ENCODE measurements at regions of chr10 and their contacts with region 1.

Region 1: DNA sequence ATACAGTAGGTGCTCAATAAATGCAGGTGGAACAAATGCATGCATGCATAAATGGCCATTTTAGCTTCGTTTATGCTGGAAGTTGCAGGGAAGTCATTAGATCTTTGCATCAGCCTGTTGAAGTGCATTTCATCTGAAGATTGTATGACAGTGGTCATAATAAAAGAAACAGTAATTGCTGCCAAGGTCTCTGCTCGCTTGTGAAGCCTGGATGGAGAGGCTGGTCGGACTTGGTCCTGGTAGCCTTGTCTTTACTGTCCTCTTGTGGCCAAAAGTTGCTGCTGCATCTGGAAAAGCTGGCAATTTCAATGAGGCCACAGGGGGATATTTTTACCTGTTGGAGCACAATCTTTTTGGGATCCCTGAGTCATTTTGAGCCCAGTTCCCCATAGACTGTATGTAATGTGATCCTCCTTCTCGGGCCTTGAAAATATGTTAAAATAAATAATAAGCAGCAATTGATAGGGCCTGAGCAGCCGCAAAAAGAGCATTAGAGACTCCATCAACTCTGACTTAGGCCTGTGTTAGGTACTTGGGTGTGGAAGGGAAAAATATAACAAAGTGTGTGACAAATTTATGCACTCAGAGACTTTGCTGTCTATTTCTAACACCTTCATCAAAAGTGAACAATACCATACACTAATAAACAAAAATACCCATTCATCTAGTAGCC is 31.6 kb upstream of the HABP2 start:
- DNase-seq: no peak
- ATAC-seq: peak; percentile 81

Region 2: DNA sequence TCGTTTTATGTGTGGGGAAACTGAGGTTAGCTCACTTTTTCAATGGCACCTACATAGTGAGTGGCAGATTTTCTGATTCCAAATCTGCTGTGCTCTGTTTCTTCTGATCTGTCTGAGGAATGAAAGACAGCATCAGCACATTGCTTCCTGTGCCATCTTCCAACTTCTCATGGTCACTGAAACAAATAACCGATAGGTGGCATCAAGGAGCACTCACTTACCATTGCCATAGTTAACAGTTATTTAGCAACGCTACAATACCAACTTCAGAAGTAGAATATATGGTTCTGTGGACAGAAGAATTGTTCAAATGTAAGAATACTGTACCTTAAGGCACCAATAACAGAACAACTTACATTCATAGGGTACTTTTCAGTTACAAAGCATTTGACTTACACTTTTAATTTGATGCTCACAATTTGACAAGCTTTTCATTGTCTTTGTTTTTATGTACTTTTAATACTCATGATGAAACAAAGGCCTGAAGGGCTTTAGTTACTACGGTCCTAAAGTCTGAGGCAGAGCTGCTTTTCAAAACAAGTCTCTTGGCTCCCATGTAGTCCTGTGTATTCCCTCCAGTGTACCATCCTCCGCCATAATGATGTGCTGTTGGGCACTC is 800.1 kb before region 1 on chr10:
- intact Hi-C with region 1: loop called (anchors 5 kb)
- DNase-seq: no peak
- ATAC-seq: peak; percentile 28

Region 3: DNA sequence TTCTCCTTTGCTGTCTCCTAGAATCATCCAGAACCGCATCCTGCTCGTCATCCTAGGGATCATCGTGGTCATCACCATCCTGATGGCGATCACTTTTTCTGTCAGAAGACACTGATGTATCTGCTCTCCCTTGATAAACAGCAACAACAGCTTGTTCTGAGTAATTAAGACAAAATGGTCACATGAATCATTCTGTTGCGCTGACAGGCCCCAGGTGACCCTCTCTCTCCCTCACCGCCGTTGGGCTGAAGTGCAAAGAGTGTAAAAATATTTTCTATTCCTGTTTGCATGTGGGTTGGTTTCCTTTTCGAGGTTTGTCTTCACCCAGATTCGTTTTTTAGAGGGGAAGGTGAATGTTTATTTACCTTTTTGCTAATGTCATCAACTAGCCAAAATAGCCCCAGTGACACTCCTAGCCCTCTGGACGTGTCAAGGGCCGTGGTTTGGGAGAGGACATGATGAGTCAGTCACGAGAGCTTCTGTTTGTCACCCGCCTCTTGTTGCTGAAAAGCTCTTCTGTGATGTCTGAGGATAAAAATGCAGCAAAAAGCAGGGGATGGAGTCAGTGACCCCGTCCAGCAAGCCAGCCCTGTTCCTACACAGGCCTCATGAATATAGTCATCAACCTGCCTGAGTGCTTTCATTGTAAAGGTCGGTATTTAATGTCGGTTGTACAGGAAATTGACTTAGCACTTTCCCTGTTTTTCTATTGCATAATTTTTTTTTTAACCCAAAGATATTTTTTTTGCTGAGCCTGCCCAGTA is 705.8 kb before region 1 on chr10:
- intact Hi-C with region 1: no loop called
- DNase-seq: no peak
- ATAC-seq: peak; percentile 35

Region 4: DNA sequence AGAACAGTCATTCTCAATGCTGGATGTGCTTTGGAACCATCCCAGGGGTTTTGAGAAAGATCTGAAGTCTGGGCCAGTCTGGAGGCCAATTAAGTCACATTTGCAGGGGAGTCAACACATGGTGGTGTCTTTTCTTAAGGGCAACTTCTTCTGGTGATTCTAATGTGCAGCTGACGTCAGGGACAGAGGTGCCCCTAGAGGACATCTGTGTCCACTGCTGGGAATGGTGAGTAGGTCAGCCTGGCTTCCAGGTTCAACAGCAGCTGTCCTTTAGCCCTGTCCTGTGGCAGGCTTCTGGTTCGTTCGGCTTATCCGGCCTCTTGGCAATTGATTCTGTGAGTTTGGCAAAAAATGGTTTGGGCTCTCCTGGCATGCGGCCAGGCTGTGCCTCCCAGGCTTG is 238.1 kb before region 1 on chr10:
- intact Hi-C with region 1: no loop called
- DNase-seq: no peak
- ATAC-seq: no peak

Region 5: DNA sequence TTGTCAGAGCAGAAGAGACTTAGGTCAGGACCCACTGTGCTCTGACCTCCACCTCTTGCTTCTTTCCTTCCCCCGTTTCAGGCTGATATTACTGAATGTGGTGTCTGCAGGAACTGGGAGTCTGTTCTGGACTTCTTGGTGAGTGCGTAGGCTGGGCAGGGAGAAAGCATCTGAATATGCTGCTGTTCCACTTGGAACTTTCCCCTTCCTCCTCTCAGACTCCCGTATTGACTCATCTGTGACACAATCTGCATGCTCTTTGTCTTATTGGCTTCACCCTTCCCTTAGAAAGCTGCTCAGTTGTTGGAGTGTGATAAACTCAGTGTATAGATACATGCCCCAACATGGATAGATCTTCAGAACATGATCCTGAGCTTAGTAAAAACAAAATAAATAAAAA is 106.0 kb before region 1 on chr10:
- intact Hi-C with region 1: no loop called
- DNase-seq: no peak
- ATAC-seq: no peak

Region 6: GRCh38 chr10:113454341-113455061 is 66.8 kb before region 1 on chr10:
- intact Hi-C with region 1: loop called (anchors 5 kb)
- DNase-seq: no peak
- ATAC-seq: peak; percentile 52

Region 7: DNA sequence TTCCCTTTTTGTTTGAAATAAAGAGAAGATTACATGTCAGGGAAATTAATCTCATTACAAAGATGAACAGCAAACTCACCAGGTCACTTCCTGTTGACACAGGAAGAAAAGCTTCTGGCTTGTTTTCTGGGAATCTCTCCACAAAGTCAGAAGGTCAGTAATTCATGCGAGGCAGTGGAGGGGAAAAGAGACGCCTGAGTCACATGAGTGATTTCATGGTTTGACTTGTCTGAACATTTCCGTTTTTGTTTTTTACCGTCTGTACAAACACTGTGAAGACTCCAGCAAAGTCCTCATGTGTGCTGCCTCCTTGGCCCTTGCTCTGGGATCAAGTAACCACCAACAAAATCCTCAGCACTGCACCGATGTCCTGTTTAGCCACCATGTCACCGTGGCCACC is 29.1 kb after region 1 on chr10:
- intact Hi-C with region 1: no loop called
- DNase-seq: no peak
- ATAC-seq: no peak

Measured in Right ventricle myocardium inferior (tissue), 1 donor.